Right lobe of liver (tissue), 6 donors: ENCODE measurements at regions of chr1 and their contacts with region 1.

Region 1: DNA sequence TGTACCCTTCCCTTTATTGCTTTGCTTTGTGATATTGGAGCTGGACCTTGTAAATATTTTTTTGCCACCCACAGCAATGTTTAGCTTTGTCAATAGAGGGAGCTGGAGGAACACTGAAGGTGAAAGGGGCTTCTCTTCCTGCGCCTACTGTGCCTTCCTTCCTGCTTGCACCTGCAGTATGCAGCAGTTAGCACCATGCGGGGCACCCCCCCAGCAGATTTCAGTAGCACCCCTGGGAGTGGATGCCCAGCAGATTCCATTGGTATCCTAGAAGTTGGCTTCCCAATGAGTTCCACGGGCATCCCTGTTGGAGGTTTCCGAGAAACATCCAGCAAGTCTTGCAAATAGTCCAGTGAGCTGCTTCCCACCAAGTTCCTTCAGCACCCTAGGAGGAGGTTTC is 25.6 kb downstream of the S100A10 start:
- DNase-seq: no peak
- ATAC-seq: peak; percentile 95 to 97 (median 96)
- H3K4me3 ChIP-seq: no peak overlapping the region
- H3K27ac ChIP-seq: no peak overlapping the region
- H3K4me1 ChIP-seq: no peaks in the 10 kb centered on the region
- H3K27me3 ChIP-seq: no peaks in the 10 kb centered on the region
- CTCF ChIP-seq: peak; percentile 73 to 81 (median 76)
- POLR2A ChIP-seq: no peak

Region 2: GRCh38 chr1:152001391-152002249 is 33.6 kb after region 1 on chr1:
- intact Hi-C with region 1: loop called in 1 of 2 experiments (anchors 5 kb)
- DNase-seq: peak; percentile 77 to 86 (median 77)
- ATAC-seq: peak; percentile 88 to 92 (median 90)
- H3K4me3 ChIP-seq: no peak overlapping the region
- H3K27ac ChIP-seq: no peak overlapping the region
- H3K4me1 ChIP-seq: no peaks in the 10 kb centered on the region
- H3K27me3 ChIP-seq: no peaks in the 10 kb centered on the region
- CTCF ChIP-seq: peak; percentile 93 to 95 (median 94)
- POLR2A ChIP-seq: no peak